HCT116 (cell line): ENCODE measurements at regions of chr10 and their contacts with region 1.

Region 1: GRCh38 chr10:14959276-14960057 is at the start of gene MEIG1:
- DNase-seq: peak; percentile 91
- ATAC-seq: peak; percentile 94
- H3K4me3 ChIP-seq: peak within 1 kb of the TSS; percentile 89 to 98
- H3K27ac ChIP-seq: peak within 1 kb of the TSS; percentile 94
- H3K4me1 ChIP-seq: peaks cover 15 to 21% of the 10 kb centered on the region in 2 experiments
- H3K27me3 ChIP-seq: no peaks in the 10 kb centered on the region
- CTCF ChIP-seq: no peak
- POLR2A ChIP-seq: peak; percentile 65
- RAD21 ChIP-seq: no peak
- total RNA-seq, gene MEIG1: 1.4 TPM

Region 2: GRCh38 chr10:15015451-15015850 is 56.0 kb after region 1 on chr10:
- CTCF ChIA-PET with region 1: no interaction called
- POLR2A ChIA-PET with region 1: no interaction called
- RAD21 ChIA-PET with region 1: no interaction called
- intact Hi-C with region 1: loop called (anchors 2 kb)
- DNase-seq: no peak
- ATAC-seq: no peak
- H3K4me3 ChIP-seq: no peak overlapping the region
- H3K27ac ChIP-seq: no peak overlapping the region
- H3K4me1 ChIP-seq: peaks cover 5 to 20% of the 10 kb centered on the region in 2 experiments; a peak in 3 of 4 replicates
- H3K27me3 ChIP-seq: no peaks in the 10 kb centered on the region
- CTCF ChIP-seq: no peak
- POLR2A ChIP-seq: no peak
- RAD21 ChIP-seq: no peak

Region 3: DNA sequence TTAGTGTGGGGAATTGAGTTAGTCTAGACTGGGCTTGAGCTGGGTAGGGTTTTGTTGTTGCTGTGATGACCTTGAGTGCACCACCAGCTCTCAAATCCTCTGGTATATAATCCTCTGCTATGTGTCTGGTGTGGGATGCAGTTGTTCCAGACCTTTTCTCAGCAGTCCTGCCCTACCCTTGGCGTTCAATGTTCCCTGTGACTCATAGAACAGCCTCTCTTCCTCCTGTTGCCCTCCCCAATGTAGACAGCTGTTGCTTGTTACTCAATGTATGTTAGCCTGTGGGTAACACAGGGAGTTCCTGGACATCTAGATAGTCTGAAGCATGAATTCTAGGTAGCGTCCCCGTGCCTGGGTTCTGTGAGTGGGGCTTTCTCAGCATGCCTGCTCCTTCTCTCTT is 109.3 kb after region 1 on chr10:
- CTCF ChIA-PET with region 1: no interaction called
- POLR2A ChIA-PET with region 1: no interaction called
- RAD21 ChIA-PET with region 1: no interaction called
- intact Hi-C with region 1: no loop called
- DNase-seq: no peak
- ATAC-seq: no peak
- H3K4me3 ChIP-seq: no peak overlapping the region
- H3K27ac ChIP-seq: no peak overlapping the region
- H3K4me1 ChIP-seq: no peaks in the 10 kb centered on the region
- H3K27me3 ChIP-seq: no peaks in the 10 kb centered on the region
- CTCF ChIP-seq: no peak
- POLR2A ChIP-seq: no peak
- RAD21 ChIP-seq: no peak